ENCODE measurements at regions of chr10 and their contacts with region 1.

Region 1: DNA sequence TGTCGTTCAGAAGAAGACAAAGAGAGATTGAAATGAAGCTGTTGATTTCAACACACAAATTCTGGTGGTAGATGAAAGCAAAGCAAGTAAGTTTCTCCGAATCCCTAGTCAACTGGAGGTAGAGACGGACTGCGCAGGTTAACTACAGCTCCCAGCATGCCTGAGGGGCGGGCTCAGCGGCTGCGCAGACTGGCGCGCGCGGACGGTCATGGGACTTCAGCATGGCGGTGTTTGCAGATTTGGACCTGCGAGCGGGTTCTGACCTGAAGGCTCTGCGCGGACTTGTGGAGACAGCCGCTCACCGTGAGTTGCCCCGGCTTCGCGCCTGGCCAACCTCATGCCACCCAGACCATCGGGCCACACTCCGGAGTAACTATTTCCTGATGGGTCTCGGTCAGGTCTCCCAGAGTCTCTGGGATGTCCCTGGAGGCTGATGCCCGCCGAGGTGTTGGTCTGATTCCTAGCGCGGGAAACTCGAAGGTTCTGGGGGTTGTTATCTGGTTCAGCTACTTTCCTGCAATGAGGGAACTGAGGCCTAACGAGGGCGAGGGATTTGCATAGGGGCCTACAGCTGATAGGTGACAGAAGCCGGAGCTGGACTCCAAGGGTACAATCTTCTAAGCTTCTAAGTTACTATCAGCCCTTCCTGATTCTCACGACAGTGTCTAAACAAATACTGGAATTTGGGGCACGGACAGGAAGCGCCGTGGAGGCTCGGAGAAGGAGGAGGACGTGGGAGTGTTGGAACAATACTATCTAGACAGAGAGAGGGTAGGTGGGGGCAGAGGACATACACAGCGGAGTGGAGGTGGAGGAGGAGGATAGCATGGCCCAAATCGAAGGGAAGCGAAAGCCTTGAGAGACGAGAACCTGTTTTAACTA is at the start of gene RPP30:
- DNase-seq: peak; percentile 91
- H3K4me3 Mint-ChIP-seq: peak within 1 kb of the TSS; percentile 93
- H3K27ac Mint-ChIP-seq: peak within 1 kb of the TSS; percentile 98
- H3K4me1 Mint-ChIP-seq: peaks cover 31% of the 10 kb centered on the region
- H3K27me3 Mint-ChIP-seq: peaks cover 24% of the 10 kb centered on the region
- total RNA-seq, gene RPP30: 103 to 108 TPM

Region 2: DNA sequence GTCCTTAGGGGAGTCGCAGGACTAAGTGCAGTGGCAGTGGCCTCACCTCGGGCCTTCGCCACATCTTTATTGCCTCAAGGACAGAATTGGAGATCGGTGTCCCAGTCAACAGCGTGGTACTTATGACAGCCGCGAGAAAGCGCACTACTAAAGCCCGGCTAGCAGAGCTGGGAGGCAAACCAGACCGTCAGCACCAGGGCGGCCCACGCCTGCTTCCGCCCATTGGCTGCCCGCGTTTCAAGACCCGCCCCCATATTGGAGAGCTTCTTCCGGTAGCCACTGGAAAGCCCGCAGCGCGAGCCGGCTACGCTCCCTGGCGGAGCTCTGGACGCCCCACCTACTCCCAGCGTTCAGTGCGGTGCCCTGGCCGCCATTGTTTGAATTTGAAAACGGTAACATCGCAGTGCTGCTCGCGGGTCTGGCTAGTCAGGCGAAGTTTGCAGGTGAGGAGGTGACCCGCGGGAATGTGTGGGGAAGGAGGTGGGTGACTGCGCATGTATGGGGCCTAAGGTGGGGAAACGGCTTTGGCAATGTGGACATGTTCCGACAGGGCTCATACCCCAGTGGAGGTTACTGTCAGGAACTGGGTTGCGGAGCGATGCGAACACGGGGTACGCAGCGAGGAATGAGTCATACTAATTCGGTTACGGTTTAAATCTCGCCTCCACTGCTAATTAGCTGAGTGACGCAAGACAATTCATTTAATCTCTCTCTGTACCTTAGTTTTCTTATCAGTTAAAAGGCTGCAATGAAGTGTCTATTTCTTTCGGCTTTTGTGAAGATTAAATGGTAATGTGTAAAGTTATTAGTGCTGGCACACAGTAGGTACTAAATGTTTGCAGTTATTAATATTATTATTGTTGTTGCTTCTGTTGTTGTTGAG is 1170.5 kb before region 1 on chr10 and contains the start of gene KIF20B:
- CTCF ChIA-PET with region 1: no interaction called
- POLR2A ChIA-PET with region 1: no interaction called
- intact Hi-C with region 1: loop called (anchors 1 kb)
- DNase-seq: peak; percentile 98
- H3K4me3 Mint-ChIP-seq: peak within 1 kb of the TSS; percentile 88
- H3K27ac Mint-ChIP-seq: peak within 1 kb of the TSS; percentile 95
- H3K4me1 Mint-ChIP-seq: peaks cover 35% of the 10 kb centered on the region
- H3K27me3 Mint-ChIP-seq: no peaks in the 10 kb centered on the region
- total RNA-seq, gene KIF20B: 65.3 to 65.6 TPM

Region 3: DNA sequence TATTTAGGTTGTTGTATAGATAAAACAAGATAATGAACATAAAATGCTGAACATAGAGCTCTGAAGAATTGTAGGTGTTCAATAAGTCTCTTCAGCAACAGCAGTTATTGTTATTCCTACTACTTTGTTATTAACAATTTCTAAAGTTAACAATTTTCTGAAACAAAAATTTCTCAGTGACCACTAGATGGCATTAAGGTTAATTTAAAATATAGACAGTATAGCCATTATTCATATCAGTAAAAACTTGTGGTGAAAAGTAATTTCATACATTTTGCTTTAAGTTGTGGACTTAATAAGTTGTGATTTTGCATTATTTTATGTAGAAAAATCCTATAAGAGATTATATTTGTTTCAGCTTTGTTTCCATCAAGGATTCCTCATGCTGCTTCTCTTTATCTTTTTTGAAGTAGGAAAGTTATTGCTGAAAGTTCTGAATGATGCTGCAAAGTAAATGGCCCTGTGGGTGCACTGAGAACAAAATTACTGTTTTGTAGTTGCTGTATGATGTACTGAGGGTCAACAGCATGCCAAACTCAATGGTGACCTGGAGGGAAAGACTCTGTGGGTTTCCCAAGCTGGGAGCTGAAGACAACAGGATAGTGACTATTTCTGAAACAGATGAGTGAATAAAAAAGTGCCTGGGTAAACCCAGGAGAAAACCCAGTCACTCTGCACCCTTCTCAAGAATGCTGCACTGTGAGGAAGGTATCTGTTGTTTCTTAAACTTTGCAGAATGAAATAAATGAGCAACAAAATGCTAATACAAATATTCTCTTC is 917.0 kb before region 1 on chr10:
- CTCF ChIA-PET with region 1: no interaction called
- POLR2A ChIA-PET with region 1: no interaction called
- intact Hi-C with region 1: loop called (anchors 10 kb)
- DNase-seq: peak; percentile 20
- H3K4me3 Mint-ChIP-seq: no peak overlapping the region
- H3K27ac Mint-ChIP-seq: no peak overlapping the region
- H3K4me1 Mint-ChIP-seq: no peaks in the 10 kb centered on the region
- H3K27me3 Mint-ChIP-seq: peaks cover 3% of the 10 kb centered on the region

Region 4: GRCh38 chr10:91006001-91006751 is 134.2 kb after region 1 on chr10:
- CTCF ChIA-PET with region 1: interaction called, 3 read pairs
- POLR2A ChIA-PET with region 1: no interaction called
- intact Hi-C with region 1: loop called (anchors 2 kb)
- DNase-seq: peak; percentile 73
- H3K4me3 Mint-ChIP-seq: no peak overlapping the region
- H3K27ac Mint-ChIP-seq: no peak overlapping the region
- H3K4me1 Mint-ChIP-seq: peaks cover 30% of the 10 kb centered on the region
- H3K27me3 Mint-ChIP-seq: no peaks in the 10 kb centered on the region

Region 5: DNA sequence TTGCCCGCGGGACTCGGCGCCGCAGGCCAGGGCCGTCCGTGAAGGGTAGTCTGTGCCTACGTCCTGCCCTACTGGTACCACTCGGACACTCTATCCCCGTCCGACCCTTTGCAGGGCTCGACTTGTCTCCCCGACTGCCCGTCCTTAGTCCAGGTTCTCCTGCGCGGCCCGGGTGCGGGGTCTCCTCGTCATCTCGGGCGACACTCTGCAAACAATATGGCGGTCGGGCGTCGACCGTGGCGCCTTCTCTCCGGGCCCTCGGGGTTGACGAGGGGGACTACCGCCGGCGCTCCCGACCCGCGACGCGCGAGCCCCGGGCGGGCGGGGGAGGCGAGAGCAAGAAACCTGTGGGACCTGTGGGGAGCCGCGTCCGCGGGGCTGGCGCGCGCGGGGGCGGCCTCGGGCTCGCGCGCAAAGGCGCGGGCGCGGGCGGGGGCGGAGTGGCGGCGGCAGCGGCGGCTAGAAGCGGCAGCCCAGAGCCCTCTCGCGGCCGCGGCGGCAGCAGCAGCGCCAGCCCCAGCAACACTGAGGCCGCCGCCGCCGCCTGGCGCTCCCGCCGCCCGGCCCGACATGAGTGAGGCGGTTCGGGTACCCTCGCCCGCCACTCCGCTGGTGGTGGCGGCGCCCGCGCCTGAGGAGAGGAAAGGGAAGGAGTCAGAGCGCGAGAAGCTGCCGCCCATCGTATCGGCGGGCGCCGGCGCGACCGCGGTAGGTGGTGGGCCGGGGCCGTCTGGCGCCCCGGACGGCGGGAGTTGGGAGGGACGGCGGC is 538.0 kb after region 1 on chr10 and contains the start of gene HECTD2:
- CTCF ChIA-PET with region 1: no interaction called
- POLR2A ChIA-PET with region 1: no interaction called
- intact Hi-C with region 1: loop called (anchors 5 kb)
- DNase-seq: peak; percentile 82
- H3K4me3 Mint-ChIP-seq: peak within 1 kb of the TSS; percentile 79
- H3K27ac Mint-ChIP-seq: peak within 1 kb of the TSS; percentile 83
- H3K4me1 Mint-ChIP-seq: peaks cover 13% of the 10 kb centered on the region
- H3K27me3 Mint-ChIP-seq: no peaks in the 10 kb centered on the region
- total RNA-seq, gene HECTD2: 4.0 to 5.5 TPM